ENCODE measurements at regions of chr1 and their contacts with region 1.

Region 1: GRCh38 chr1:153749408-153750005 is 21.7 kb downstream of the INTS3 start:
- DNase-seq: peak; percentile 46 to 92 (median 84)
- ATAC-seq: peak; percentile 97
- H3K4me3 ChIP-seq: no peak overlapping the region
- H3K27ac ChIP-seq: peak overlapping the region; percentile 65 to 71
- H3K4me1 ChIP-seq: peaks cover 28 to 45% of the 10 kb centered on the region in 2 donors
- H3K27me3 ChIP-seq: no peaks in the 10 kb centered on the region
- CTCF ChIP-seq: peak; percentile 96 to 97

Region 2: GRCh38 chr1:153100236-153100635 is 649.3 kb before region 1 on chr1:
- intact Hi-C with region 1: no loop called
- DNase-seq: no peak
- ATAC-seq: no peak
- H3K4me3 ChIP-seq: no peak overlapping the region
- H3K27ac ChIP-seq: no peak overlapping the region
- H3K4me1 ChIP-seq: no peaks in the 10 kb centered on the region
- H3K27me3 ChIP-seq: no peaks in the 10 kb centered on the region
- CTCF ChIP-seq: no peak

Region 3: DNA sequence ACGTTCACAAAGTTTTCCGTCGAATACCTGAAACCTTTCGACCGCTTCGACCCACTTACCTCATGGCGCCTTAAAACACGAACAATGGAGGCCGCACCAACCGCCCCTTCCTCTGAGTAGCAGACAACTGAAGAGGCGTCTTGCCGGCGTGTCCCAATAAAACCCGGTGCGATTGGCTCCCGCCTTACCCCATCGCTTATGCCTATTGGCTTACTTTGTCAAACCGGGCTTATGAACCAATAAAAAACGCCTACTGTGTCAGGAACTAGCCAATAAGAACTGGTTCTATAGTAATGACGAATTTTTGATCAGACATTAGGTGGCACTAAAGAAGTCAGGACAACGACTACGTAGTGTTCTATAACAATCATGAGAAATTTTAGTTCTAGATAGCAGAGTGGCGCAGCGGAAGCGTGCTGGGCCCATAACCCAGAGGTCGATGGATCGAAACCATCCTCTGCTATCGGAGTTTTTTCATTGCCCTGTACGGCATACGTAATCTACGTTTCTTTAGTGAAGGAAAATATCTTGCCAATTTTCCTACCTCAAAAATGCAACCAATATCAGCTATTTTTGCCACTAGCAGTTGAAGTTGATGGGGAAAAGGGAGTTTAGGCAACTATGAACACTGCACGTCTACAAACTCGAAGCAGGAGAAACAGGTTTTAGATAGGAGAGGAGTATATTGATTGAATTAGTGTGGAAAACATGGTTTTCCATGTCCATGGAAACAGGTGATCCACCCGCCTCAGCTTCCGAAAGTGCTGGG is 78.5 kb before region 1 on chr1 and contains the start of gene ILF2:
- intact Hi-C with region 1: loop called in 1 of 2 experiments (anchors 10 kb)
- DNase-seq: peak; percentile 91 to 99 (median 98)
- ATAC-seq: peak; percentile 94
- H3K4me3 ChIP-seq: peak within 1 kb of the TSS; percentile 89 to 91
- H3K27ac ChIP-seq: peak within 1 kb of the TSS; percentile 89 to 92
- H3K4me1 ChIP-seq: peaks cover 9 to 37% of the 10 kb centered on the region in 2 donors
- H3K27me3 ChIP-seq: no peaks in the 10 kb centered on the region
- CTCF ChIP-seq: no peak
- polyA plus RNA-seq, gene ILF2: 239 to 295 (median 260) TPM